ENCODE measurements at regions of chr6 and their contacts with region 1.

Region 1: GRCh38 chr6:84428300-84428907 is 201.0 kb upstream of the CEP162 start:
- DNase-seq: peak; percentile 82
- H3K4me3 ChIP-seq: no peak overlapping the region
- H3K27ac ChIP-seq: no peak overlapping the region
- H3K4me1 ChIP-seq: no peaks in the 10 kb centered on the region
- H3K27me3 ChIP-seq: no peaks in the 10 kb centered on the region
- CTCF ChIP-seq: peak; percentile 86 to 88
- POLR2A ChIP-seq: no peak

Region 2: GRCh38 chr6:84449220-84449619 is 20.8 kb after region 1 on chr6:
- CTCF ChIA-PET with region 1: interaction called, 10 read pairs
- POLR2A ChIA-PET with region 1: no interaction called
- dilution Hi-C with region 1: no loop called
- intact Hi-C with region 1: no loop called
- DNase-seq: peak; percentile 67
- H3K4me3 ChIP-seq: no peak overlapping the region
- H3K27ac ChIP-seq: no peak overlapping the region
- H3K4me1 ChIP-seq: peaks cover 6% of the 10 kb centered on the region
- H3K27me3 ChIP-seq: no peaks in the 10 kb centered on the region
- CTCF ChIP-seq: no peak
- POLR2A ChIP-seq: no peak

Region 3: DNA sequence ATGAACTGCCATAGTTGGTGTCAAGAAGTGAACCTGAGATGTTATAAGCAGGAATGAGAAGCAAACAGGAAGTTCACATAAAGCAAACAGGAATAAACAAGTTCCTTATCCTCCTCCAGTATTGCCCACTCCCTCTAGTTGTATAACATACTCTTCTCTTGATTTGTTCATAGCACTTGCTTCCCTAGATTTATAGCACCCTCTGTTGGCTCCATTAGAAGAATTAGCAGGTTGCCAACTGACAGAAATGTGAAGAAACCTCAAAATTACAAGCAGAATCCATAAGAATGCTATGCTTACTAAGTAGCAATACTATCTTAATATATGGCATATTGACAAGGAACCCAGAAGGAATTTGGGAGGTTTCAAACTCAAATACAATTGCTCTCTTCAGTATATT is 140.6 kb after region 1 on chr6:
- CTCF ChIA-PET with region 1: interaction called, 46 read pairs
- POLR2A ChIA-PET with region 1: no interaction called
- dilution Hi-C with region 1: no loop called
- intact Hi-C with region 1: loop called (anchors 1 kb)
- DNase-seq: peak; percentile 64
- H3K4me3 ChIP-seq: no peak overlapping the region
- H3K27ac ChIP-seq: no peak overlapping the region
- H3K4me1 ChIP-seq: no peaks in the 10 kb centered on the region
- H3K27me3 ChIP-seq: no peaks in the 10 kb centered on the region
- CTCF ChIP-seq: peak in 1 of 2 donors; percentile 30
- POLR2A ChIP-seq: no peak

Region 4: GRCh38 chr6:84667252-84668213 is 239.1 kb after region 1 on chr6:
- CTCF ChIA-PET with region 1: interaction called, 5 read pairs
- POLR2A ChIA-PET with region 1: no interaction called
- dilution Hi-C with region 1: no loop called
- intact Hi-C with region 1: loop called (anchors 1 kb)
- DNase-seq: peak; percentile 88
- H3K4me3 ChIP-seq: no peak overlapping the region
- H3K27ac ChIP-seq: peak overlapping the region; percentile 89
- H3K4me1 ChIP-seq: peaks cover 17% of the 10 kb centered on the region
- H3K27me3 ChIP-seq: no peaks in the 10 kb centered on the region
- CTCF ChIP-seq: no peak
- POLR2A ChIP-seq: no peak

Region 5: GRCh38 chr6:84774157-84774984 is 346.0 kb after region 1 on chr6:
- CTCF ChIA-PET with region 1: interaction called, 170 read pairs
- POLR2A ChIA-PET with region 1: no interaction called
- dilution Hi-C with region 1: no loop called
- intact Hi-C with region 1: loop called (anchors 1 kb)
- DNase-seq: peak; percentile 79
- H3K4me3 ChIP-seq: peak overlapping the region; percentile 52 to 55 (median 54)
- H3K27ac ChIP-seq: no peak overlapping the region
- H3K4me1 ChIP-seq: peaks cover 15% of the 10 kb centered on the region
- H3K27me3 ChIP-seq: peaks cover 30 to 76% of the 10 kb centered on the region in 2 experiments
- CTCF ChIP-seq: peak; percentile 79 to 85
- POLR2A ChIP-seq: peak; percentile 35

Region 6: DNA sequence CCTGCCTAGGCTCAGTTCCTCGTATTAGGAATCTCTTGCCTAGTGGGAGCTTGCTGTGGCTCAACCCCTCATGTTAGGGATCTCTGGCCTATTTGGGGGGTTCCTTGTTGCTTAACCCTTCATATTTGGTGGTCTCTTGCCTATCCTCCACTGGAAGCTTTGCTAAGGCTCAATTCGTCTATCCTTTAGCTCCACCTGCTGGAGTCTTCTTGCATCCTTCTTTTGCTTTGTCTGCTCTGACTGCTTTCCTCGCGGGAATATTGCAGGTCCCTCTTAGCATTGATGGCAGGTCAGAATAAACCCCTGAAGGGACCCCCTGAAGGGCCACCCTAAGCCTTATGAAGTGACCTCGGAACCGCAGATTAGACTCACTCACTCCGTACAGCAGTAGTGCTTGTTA is 539.0 kb after region 1 on chr6:
- CTCF ChIA-PET with region 1: interaction called, 10 read pairs
- POLR2A ChIA-PET with region 1: no interaction called
- dilution Hi-C with region 1: no loop called
- intact Hi-C with region 1: loop called (anchors 1 kb)
- DNase-seq: peak; percentile 75
- H3K4me3 ChIP-seq: no peak overlapping the region
- H3K27ac ChIP-seq: no peak overlapping the region
- H3K4me1 ChIP-seq: no peaks in the 10 kb centered on the region
- H3K27me3 ChIP-seq: no peaks in the 10 kb centered on the region
- CTCF ChIP-seq: peak; percentile 52 to 62
- POLR2A ChIP-seq: no peak